ENCODE measurements at regions of chr14 and their contacts with region 1.

Region 1: GRCh38 chr14:51780006-51780692 is 80.3 kb upstream of the GNG2 start:
- DNase-seq: no peak
- H3K4me3 ChIP-seq: no peak overlapping the region; the same call in 1 of the 2 replicates
- CTCF ChIP-seq: peak; percentile 61

Region 2: DNA sequence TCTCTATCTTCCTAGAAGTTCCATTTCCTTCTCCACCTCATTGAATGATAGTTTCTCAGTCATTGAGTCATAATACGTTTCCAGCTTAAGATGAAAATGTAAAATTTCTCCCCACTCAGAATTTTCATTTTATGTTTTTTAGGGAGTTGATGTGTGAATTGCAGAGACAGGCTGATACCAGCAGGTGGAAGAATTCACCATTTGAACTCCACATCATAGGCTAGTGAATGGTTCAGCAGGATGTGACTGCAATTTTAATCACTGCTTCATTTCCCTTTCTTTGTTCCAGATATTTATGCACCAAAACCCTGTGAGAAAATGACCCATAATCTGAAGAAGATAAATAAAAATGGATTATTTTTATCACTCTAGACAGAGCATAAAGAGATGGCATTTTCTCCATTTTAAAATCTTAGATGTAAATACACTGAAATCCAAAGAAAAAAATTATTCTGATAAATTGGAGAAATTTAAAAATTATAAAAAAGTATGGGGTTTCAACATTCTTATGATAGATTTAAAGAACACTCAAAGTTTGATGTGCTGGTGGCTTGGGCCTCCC is 825.3 kb before region 1 on chr14:
- CTCF ChIA-PET with region 1: interaction called, 13 read pairs
- POLR2A ChIA-PET with region 1: no interaction called
- DNase-seq: no peak
- H3K4me3 ChIP-seq: no peak overlapping the region
- CTCF ChIP-seq: peak; percentile 61

Region 3: GRCh38 chr14:51269634-51270033 is 510.5 kb before region 1 on chr14:
- CTCF ChIA-PET with region 1: interaction called, 21 read pairs
- POLR2A ChIA-PET with region 1: no interaction called
- DNase-seq: no peak
- H3K4me3 ChIP-seq: no peak overlapping the region
- CTCF ChIP-seq: no peak

Region 4: DNA sequence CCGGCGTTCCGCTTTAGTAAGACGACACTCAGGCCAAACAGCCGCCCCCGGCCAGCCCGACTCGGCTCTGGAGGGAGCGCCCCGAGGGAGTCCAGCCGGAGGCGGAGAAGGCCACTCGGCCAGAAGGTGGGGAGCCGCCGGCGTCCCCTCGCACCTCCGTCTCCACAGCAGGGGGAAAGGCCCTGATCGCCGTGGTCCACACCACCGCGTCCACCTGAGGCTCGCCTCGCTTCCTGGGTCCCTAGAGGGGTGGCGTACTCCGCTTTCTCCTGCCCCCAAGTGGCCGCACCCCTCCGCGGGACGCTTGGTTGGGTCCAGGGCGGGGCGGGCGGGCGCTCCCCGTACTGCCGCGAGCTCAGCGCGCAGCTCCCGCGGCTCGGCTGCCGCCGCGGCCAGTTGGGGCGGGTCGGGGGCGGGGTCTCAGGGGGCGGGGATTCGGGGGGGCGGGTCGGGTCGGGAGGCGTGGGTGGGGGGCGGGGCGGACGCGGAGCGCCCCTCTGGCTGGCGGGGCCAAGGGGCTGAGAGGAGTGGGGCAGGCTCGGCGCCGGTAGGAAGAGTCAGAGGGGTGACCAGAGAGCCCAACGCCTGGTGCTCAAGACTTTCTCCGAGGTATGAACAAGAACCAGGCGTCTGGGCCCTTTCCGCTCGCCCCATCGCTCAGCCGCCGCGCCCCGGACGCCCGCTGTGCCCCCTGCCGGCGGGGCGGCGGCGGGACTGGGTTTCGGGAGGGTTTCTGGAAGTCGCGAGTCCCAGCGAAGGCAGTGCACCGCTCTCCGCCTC is 128.6 kb before region 1 on chr14 and contains the start of gene FRMD6:
- CTCF ChIA-PET with region 1: interaction called, 24 read pairs
- POLR2A ChIA-PET with region 1: no interaction called
- DNase-seq: no peak
- H3K4me3 ChIP-seq: peak within 1 kb of the TSS; percentile 83
- CTCF ChIP-seq: peak; percentile 59

Region 5: GRCh38 chr14:51719955-51720354 is 60.2 kb before region 1 on chr14:
- CTCF ChIA-PET with region 1: interaction called, 11 read pairs
- POLR2A ChIA-PET with region 1: no interaction called
- DNase-seq: no peak
- H3K4me3 ChIP-seq: no peak overlapping the region
- CTCF ChIP-seq: no peak

Region 6: DNA sequence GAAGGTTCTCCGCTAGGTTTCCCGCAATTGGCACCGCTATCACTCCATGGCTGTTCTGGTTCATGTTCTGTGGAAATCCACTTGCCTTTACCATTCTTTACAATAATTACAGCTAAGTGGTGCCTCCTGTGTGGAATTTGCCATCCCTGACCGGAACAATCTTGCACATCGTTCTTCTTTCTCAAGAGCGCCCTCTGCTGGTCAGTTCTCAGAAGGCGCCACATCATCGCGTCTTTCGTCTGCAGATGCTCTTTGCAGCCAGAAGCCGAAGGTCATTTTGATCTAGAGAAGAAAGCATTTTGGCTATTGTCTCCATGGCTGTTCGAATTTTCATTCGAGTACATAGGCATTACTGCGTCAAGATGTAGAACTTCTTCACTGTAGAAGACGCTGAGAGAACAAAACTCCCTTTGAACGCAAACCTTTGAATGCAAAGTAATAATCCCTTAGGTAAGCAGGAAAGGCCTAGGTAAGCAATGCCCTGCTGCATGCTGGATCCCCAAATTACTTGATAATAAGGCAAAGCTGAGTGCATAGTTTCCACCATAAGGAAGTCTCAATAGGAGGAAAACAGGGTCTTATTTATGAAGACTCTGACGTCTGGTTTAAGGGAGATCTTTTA is 199.1 kb after region 1 on chr14:
- CTCF ChIA-PET with region 1: interaction called, 105 read pairs
- POLR2A ChIA-PET with region 1: no interaction called
- DNase-seq: no peak
- H3K4me3 ChIP-seq: no peak overlapping the region
- CTCF ChIP-seq: peak; percentile 82

Measured in AG04449 (cell line).